Activated CD4-positive, alpha-beta T cell treated with anti-CD3 and anti-CD28 coated beads, Interleukin-2, amount 10 ng/mL, durations not matched to agents 24 days and 14 days (primary cell): ENCODE measurements at regions of chr11 and their contacts with region 1.

Region 1: DNA sequence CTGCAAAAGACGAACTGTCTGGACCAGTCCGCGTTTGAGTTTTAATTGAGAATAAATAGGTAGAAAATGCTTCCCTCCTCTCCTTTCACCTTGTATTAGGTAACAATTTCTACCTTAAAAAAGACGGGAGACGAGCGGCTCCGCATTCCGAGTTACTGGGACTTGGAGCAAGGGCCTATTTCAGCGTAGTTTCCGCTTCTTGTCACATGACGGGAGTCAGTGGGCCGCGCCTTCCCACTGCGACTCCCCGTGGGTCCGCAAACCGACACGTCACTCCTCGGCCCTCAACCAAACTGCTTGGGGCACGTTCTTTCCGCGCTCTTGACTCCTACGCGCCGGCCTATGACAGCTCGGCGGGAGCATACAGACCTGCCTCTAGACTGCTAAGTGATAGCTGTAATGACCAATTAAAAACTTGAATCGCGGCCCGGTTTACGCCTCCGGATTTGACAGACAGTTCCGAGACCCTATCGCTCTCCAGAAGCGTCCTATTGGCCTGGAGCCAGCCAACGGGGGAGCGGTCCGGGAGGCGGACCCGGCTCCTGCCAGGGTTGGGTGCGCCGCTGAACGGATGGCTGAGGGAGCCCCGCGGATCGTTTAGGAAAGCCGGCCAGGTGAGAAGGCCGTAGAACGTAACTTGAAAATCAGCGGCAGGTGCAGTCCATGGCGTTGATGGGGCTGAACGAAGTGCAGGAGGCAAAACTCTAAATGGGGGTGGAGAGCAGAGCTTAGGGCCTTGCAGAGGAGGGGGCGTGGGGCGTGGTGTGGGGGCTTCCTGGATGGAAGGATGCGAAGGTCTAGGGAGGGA is at the start of gene STT3A:
- DNase-seq: peak; percentile 99
- H3K4me3 Mint-ChIP-seq: peak within 1 kb of the TSS; percentile 98
- H3K27ac Mint-ChIP-seq: peak within 1 kb of the TSS; percentile 95
- H3K4me1 Mint-ChIP-seq: peaks cover 37% of the 10 kb centered on the region
- H3K27me3 Mint-ChIP-seq: no peaks in the 10 kb centered on the region
- total RNA-seq, gene STT3A: 167 and 183 TPM in 2 replicates

Region 2: GRCh38 chr11:125568970-125569914 is 23.3 kb before region 1 on chr11 and contains the start of gene EI24:
- intact Hi-C with region 1: loop called (anchors 1 kb)
- DNase-seq: peak; percentile 97
- H3K4me3 Mint-ChIP-seq: peak within 1 kb of the TSS; percentile 96
- H3K27ac Mint-ChIP-seq: peak within 1 kb of the TSS; percentile 94
- H3K4me1 Mint-ChIP-seq: peaks cover 18% of the 10 kb centered on the region
- H3K27me3 Mint-ChIP-seq: no peaks in the 10 kb centered on the region
- total RNA-seq, gene EI24: 61.7 TPM in 2 replicates

Region 3: GRCh38 chr11:125625630-125626287 is 33.2 kb after region 1 on chr11:
- intact Hi-C with region 1: loop called (anchors 1 kb)
- DNase-seq: peak; percentile 96
- H3K4me3 Mint-ChIP-seq: peak overlapping the region; percentile 93
- H3K27ac Mint-ChIP-seq: peak overlapping the region; percentile 95
- H3K4me1 Mint-ChIP-seq: peaks cover 24% of the 10 kb centered on the region
- H3K27me3 Mint-ChIP-seq: no peaks in the 10 kb centered on the region

Region 4: DNA sequence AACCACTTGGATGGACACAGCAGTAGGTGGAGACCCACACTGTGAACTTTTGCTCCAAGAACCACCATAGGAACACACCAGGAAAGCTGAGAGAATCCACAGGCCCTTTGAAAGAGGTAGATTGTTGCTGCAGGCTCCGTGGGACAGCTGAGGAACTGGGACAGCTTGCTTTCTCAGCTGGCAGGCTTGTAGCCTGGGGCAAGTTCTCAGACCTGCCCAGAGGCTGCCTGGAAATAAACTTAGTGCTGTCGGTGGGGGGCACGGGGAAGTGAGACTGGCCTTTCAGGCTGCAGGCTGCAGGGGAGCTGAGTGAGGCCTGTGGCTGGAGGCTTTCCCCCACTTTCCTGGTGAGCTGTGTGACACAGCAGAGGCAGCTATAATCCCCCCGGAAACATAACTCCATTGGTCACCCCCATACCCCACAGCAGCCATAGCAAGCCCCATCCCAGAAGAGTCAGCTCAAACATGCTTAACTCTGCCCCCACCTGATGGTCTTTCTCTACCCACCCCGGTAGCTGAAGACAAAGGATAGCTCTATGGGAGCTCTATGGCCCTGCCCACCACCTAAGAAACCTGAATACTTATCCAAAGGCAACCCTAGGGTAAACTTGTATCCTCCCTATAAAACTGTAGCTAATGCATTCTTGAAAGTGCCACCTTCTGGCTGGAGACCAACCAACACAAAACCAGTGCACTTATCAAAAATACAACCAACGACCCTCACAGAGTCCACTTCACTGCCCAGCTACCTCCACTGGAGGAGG is 109.5 kb after region 1 on chr11:
- intact Hi-C with region 1: no loop called
- DNase-seq: peak; percentile 36
- H3K4me3 Mint-ChIP-seq: no peak overlapping the region
- H3K27ac Mint-ChIP-seq: no peak overlapping the region
- H3K4me1 Mint-ChIP-seq: no peaks in the 10 kb centered on the region
- H3K27me3 Mint-ChIP-seq: peaks cover 3% of the 10 kb centered on the region

Region 5: GRCh38 chr11:125902927-125903710 is 310.6 kb after region 1 on chr11 and contains the start of gene PUS3:
- intact Hi-C with region 1: loop called (anchors 1 kb)
- DNase-seq: peak; percentile 97
- H3K4me3 Mint-ChIP-seq: peak within 1 kb of the TSS; percentile 95
- H3K27ac Mint-ChIP-seq: peak within 1 kb of the TSS; percentile 94
- H3K4me1 Mint-ChIP-seq: peaks cover 28% of the 10 kb centered on the region
- H3K27me3 Mint-ChIP-seq: peaks cover 29% of the 10 kb centered on the region
- total RNA-seq, gene PUS3: 18.0 and 19.2 TPM in 2 replicates

Region 6: DNA sequence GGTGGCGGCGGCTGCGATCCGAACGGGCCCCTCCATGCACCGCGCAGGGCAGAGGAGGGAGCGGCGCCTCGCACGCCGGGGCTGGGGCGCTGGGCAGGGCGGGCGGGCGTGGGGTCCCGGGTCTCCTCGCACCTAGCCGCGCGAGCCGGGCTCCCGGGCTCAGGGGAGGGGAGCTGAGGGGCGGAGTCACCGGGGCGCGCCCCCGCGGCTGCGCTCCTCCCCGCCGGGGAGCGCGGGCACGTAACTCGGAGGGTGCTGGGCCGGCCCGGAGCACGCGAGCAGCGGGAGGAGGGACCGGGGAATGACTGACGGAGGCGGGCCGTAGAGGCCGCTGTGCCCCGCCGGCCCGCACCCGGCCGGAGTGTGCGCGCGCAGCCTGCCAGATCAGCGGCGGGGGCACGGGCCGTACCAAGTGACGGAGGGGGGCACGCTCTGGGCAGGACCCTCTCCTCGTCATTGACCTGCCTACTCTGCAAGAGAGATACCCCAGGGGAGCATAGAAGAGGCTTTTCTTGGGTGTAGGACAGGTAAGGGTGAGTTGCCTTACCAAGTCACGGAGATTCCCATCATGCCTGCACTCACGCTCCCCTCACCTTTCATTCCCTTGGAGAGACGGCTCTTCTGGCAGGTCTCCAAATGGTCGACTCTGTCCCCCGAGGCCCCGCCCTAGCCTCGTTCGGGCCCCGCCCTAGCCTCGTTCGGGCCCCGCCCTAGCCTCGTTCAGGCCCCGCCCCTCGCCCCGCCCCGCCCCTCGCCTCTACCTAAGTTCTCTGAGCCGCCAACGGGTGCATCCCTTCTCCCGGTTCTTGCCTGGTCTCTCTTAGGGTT is 470.4 kb after region 1 on chr11 and contains the start of gene CDON:
- intact Hi-C with region 1: loop called (anchors 1 kb)
- DNase-seq: peak; percentile 98
- H3K4me3 Mint-ChIP-seq: peak within 1 kb of the TSS; percentile 80
- H3K27ac Mint-ChIP-seq: peak within 1 kb of the TSS; percentile 97
- H3K4me1 Mint-ChIP-seq: peaks cover 5% of the 10 kb centered on the region
- H3K27me3 Mint-ChIP-seq: peaks cover 46% of the 10 kb centered on the region
- total RNA-seq, gene CDON: 1.9 TPM in 2 replicates

Region 7: DNA sequence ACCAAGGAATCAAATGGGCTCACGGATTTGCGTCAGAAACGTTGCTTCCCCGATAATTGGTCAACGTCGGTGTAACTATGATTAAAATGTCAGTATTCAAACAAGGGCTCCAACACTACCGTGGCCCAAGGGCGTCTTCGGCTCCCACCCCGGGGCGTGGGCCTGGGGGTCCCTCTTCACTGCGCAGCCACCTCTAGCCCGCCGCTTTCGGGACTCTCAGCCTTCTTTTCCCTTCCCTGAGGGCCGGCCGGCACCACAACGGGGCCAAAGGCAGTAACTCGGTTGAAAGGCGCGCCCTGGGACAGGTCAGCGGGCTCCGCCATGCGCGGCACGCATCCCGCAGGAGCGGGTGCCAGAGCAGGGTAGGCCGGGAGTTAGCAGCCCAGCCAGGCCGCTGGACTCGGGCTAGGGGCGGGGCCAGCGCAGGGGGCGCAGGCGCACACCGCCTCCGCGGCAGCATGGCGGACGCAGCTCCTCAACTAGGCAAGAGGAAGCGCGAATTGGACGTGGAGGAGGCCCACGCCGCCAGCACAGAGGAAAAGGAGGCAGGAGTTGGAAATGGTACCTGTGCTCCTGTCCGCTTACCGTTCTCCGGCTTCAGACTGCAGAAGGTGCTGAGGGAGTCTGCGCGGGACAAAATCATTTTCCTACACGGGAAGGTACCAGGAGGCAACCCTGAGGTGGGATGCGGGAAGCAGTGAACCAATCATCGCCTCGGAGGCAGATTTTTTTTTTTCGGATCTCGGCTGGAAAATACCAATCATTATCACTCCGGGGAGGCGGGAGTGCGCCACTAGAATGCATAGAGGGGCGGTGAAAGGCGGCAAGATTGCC is 711.3 kb after region 1 on chr11 and contains the start of gene DCPS:
- intact Hi-C with region 1: loop called (anchors 1 kb)
- DNase-seq: peak; percentile 97
- H3K4me3 Mint-ChIP-seq: peak within 1 kb of the TSS; percentile 91
- H3K27ac Mint-ChIP-seq: peak within 1 kb of the TSS; percentile 97
- H3K4me1 Mint-ChIP-seq: peaks cover 19% of the 10 kb centered on the region
- H3K27me3 Mint-ChIP-seq: no peaks in the 10 kb centered on the region
- total RNA-seq, gene DCPS: 36.0 and 40.2 TPM in 2 replicates